HCT116 (cell line): ENCODE measurements at regions of chr2 and their contacts with region 1.

Region 1: GRCh38 chr2:13000664-13001363 is 284.1 kb downstream of the TRIB2 start:
- DNase-seq: no peak
- ATAC-seq: no peak
- H3K4me3 ChIP-seq: no peak overlapping the region
- H3K27ac ChIP-seq: no peak overlapping the region
- H3K4me1 ChIP-seq: no peaks in the 10 kb centered on the region
- H3K27me3 ChIP-seq: no peaks in the 10 kb centered on the region
- CTCF ChIP-seq: no peak
- POLR2A ChIP-seq: no peak
- RAD21 ChIP-seq: no peak

Region 2: DNA sequence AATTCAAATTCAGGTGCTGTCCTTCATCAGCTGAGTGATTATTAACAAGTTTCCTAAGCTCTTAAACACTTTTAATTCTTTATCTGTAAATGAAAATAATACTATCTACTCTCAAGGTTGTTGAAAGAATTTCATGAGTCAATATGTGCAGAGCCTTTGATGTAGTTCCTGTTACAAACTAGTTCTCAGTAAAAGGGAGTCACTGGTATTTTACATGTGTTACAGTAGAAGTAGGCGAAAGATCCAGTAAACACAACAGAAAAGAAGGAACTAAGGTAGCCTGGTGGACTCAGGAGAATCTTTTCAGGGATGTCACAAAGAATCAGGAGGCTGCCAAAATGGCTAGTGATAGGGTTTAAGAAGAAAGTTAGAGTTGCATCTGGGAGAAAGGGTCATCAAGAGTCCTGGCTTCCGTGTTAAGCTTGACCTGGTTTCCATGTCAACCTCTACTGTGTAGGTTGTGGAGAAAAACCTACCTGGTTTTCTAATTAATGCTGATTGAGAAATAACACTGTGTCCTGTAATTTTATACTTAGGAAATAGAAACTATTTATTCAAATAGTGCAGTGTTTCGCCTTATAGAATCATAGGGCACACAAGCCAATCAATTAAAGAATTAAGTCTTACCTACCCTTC is 342.4 kb before region 1 on chr2:
- CTCF ChIA-PET with region 1: no interaction called
- POLR2A ChIA-PET with region 1: no interaction called
- RAD21 ChIA-PET with region 1: no interaction called
- intact Hi-C with region 1: no loop called
- DNase-seq: no peak
- ATAC-seq: no peak
- H3K4me3 ChIP-seq: no peak overlapping the region
- H3K27ac ChIP-seq: no peak overlapping the region
- H3K4me1 ChIP-seq: no peaks in the 10 kb centered on the region
- H3K27me3 ChIP-seq: no peaks in the 10 kb centered on the region
- CTCF ChIP-seq: no peak
- POLR2A ChIP-seq: no peak
- RAD21 ChIP-seq: no peak

Region 3: GRCh38 chr2:12931186-12931844 is 69.5 kb before region 1 on chr2:
- CTCF ChIA-PET with region 1: no interaction called
- POLR2A ChIA-PET with region 1: no interaction called
- RAD21 ChIA-PET with region 1: no interaction called
- intact Hi-C with region 1: loop called (anchors 5 kb)
- DNase-seq: peak; percentile 28
- ATAC-seq: peak; percentile 95
- H3K4me3 ChIP-seq: no peak overlapping the region
- H3K27ac ChIP-seq: no peak overlapping the region
- H3K4me1 ChIP-seq: peaks cover 0 to 8% of the 10 kb centered on the region in 2 experiments; a peak in 2 of 4 replicates
- H3K27me3 ChIP-seq: no peaks in the 10 kb centered on the region
- CTCF ChIP-seq: peak; percentile 55 to 74 (median 72); a peak in 5 of 6 replicates
- POLR2A ChIP-seq: no peak
- RAD21 ChIP-seq: peak; percentile 76

Region 4: DNA sequence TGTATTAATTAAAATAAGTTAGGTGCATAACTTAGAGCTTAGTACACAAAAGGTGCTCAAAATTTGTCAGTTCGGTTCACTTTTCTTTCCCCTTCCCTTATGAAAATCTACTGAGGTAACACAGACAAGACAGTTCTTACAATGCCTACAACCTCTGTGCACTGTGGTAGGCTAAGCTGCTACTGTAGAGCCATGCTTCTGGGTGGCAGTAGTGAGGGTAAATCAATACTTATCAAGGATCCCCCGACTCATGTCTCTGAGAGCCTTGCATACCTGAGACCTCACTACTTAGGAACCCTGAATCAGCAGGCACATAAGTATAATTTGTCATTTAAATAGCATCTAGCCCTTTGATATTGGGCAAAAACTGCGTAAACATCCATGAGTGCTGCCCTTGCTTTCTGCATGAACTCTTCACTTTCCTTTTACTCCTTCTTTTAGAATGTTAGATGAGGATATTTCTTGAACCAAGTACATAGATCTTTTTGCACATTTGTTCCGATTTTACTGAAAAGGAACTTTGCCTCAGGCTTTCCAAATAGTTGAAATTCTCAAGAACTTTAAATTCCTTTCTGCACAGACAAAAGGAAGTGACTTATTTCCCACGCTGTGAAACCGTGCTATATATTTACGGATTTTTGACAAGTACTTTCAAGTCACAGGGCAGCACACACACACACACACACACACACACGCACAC is 49.7 kb before region 1 on chr2:
- CTCF ChIA-PET with region 1: no interaction called
- POLR2A ChIA-PET with region 1: no interaction called
- RAD21 ChIA-PET with region 1: no interaction called
- intact Hi-C with region 1: no loop called
- DNase-seq: no peak
- ATAC-seq: no peak
- H3K4me3 ChIP-seq: no peak overlapping the region
- H3K27ac ChIP-seq: no peak overlapping the region
- H3K4me1 ChIP-seq: no peaks in the 10 kb centered on the region
- H3K27me3 ChIP-seq: no peaks in the 10 kb centered on the region
- CTCF ChIP-seq: no peak
- POLR2A ChIP-seq: no peak
- RAD21 ChIP-seq: no peak

Region 5: DNA sequence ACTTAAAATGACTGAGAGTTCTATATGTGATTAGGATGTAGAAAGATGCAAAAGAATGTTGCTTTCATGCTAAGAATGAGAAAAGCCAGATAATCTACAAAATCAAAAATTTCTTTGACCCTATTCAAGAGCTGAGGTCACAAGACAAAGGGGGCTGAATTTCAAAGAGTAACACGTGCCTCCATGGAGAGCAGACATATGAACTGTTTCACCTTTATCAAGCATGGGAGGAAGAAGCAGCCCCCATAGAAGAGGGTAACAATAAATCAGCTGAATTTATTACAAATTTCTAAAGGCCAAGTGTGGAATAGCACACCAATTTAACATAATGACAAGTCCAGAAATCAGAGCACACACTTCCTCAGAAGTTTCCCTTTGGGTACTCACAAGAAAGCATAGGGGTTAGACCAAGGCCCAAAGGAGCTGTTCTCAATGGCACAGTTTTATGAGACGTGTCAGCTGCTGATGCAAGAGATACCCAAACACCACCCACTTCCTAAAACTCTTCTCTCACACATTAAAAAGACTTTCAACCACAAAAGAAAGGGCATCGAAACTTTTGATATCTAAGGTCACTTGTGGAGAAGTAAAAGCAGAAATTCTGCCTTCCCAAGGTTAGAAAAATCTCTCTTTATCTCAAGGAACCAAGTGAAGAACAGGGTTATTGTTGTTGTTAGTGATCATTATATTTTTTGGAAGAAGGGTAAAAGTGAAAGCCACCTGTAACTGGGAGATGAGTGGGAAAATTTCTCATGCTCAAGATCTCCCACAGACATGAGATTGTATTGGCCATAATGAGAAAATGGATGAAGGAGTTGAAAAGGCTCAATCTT is 666.0 kb after region 1 on chr2:
- CTCF ChIA-PET with region 1: no interaction called
- POLR2A ChIA-PET with region 1: no interaction called
- RAD21 ChIA-PET with region 1: no interaction called
- intact Hi-C with region 1: no loop called
- DNase-seq: no peak
- ATAC-seq: no peak
- H3K4me3 ChIP-seq: no peak overlapping the region
- H3K27ac ChIP-seq: no peak overlapping the region
- H3K4me1 ChIP-seq: no peaks in the 10 kb centered on the region
- H3K27me3 ChIP-seq: no peaks in the 10 kb centered on the region
- CTCF ChIP-seq: no peak
- POLR2A ChIP-seq: no peak
- RAD21 ChIP-seq: no peak